Activated CD8-positive, alpha-beta T cell treated with anti-CD3 and anti-CD28 coated beads for 36 hours (primary cell): ENCODE measurements at regions of chr20 and their contacts with region 1.

Region 1: DNA sequence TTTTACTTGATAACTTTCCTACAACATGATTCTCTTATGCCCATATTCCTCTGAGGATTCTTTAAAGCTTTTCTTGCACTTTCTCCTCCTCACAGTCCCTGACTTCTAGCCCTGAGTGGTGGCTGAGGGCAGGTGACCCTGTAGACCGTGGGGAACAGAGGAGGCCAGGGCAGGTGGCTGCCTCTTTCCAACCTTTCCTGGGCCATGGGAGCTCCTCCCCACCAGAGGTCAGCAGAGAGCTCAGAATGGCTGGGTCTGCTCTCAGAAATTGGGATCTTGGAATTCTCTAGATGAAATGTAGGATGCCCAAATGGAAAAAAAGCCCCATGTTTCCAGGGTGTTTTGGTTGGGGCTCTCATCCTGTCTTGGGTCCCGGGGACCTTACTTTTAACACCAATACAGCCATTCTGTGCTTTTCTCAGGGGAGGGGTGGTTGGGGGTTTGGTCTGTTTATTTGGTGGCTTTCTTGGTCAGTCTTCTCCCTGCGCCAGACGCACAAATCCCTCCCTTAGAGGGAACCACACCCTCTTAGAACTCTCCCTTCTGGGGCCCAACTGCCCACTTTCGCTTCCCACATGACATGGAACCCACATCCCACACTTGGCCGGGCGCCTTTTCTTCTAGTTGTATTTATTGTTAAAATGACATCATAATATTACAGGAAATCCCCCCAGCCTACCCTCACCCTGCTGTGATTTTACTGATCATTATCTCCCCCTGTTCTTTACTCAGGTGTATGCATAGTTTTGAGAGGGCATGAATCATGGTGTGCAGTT is 17.9 kb downstream of the GNAS start:
- DNase-seq: peak; percentile 72
- ATAC-seq: peak; percentile 76
- H3K4me3 Mint-ChIP-seq: no peak overlapping the region
- H3K27ac Mint-ChIP-seq: no peak overlapping the region
- H3K4me1 Mint-ChIP-seq: peaks cover 11% of the 10 kb centered on the region
- H3K27me3 Mint-ChIP-seq: peaks cover 6% of the 10 kb centered on the region
- CTCF ChIP-seq: peak; percentile 88

Region 2: GRCh38 chr20:58880994-58881752 is 10.7 kb after region 1 on chr20:
- CTCF ChIA-PET with region 1: interaction called, 18 read pairs
- POLR2A ChIA-PET with region 1: no interaction called
- intact Hi-C with region 1: no loop called
- DNase-seq: peak; percentile 47
- ATAC-seq: no peak
- H3K4me3 Mint-ChIP-seq: no peak overlapping the region
- H3K27ac Mint-ChIP-seq: no peak overlapping the region
- H3K4me1 Mint-ChIP-seq: peaks cover 32% of the 10 kb centered on the region
- H3K27me3 Mint-ChIP-seq: no peaks in the 10 kb centered on the region
- CTCF ChIP-seq: peak; percentile 56

Region 3: DNA sequence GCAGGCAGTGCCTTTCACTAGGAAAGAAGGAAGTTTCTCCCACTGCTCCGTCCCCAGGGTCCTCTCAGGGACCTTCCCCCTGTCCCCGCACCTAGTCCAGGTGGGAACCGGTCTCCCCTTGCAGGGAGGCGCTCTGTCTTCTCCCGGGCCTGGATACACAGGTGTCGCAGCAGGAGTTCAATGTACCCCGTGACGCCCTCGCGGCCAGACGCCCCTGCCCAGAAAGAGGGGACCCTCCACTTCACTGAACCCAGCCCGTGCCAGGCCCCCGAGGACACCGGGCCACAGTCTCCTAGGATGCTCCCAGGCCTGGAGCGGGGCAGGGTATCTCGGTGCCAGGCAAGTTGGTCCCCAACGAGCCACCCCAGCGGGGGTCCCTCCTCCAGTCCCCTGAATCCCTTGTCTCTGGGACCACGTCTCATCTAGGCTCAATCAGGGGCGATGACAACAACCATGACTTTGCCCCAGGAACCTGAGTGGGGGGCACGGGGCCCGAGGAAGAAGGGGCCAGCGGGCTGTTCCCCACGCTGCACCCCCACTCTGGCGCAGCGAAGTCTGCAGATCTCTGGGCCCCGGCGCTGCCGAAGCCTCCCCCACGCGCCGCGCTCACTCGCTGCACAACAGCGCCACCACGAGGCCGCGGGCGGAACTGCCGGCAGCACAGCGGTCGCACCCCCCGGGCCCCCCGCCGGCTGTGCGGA is 533.0 kb after region 1 on chr20:
- CTCF ChIA-PET with region 1: interaction called, 6 read pairs
- POLR2A ChIA-PET with region 1: no interaction called
- intact Hi-C with region 1: loop called (anchors 5 kb)
- DNase-seq: peak; percentile 78
- ATAC-seq: peak; percentile 83
- H3K4me3 Mint-ChIP-seq: no peak overlapping the region
- H3K27ac Mint-ChIP-seq: peak overlapping the region; percentile 44
- H3K4me1 Mint-ChIP-seq: peaks cover 2% of the 10 kb centered on the region
- H3K27me3 Mint-ChIP-seq: peaks cover 9% of the 10 kb centered on the region
- CTCF ChIP-seq: peak; percentile 100